T-cell (primary cell): ENCODE measurements at regions of chr1 and their contacts with region 1.

Region 1: DNA sequence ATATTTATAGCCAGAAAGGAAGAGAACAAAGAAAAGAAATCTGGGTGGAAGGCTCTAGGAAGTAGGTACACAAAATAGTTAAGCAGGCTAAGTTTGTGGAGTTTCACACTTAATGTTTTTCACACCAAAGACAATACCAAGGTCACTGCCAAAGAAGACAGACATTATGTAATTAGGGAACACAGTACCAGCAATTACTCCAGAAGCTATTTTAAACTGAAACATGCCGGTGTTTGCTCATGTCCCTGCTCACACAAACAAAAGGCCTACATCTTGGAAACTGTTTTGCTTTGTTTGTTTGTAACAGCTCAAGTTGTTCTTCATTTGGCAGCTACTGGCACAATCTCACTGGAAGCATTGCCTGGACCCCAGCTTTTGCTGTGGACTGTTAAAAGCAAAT is 88.5 kb upstream of the DAB1 start:
- DNase-seq: no peak
- ATAC-seq: no peak
- H3K4me3 ChIP-seq: no peak overlapping the region
- H3K4me3 Mint-ChIP-seq: no peak overlapping the region
- H3K27ac ChIP-seq: no peak overlapping the region
- H3K27ac Mint-ChIP-seq: no peak overlapping the region
- H3K4me1 ChIP-seq: no peaks in the 10 kb centered on the region
- H3K4me1 Mint-ChIP-seq: no peaks in the 10 kb centered on the region
- H3K27me3 ChIP-seq: peaks cover 0 to 3% of the 10 kb centered on the region in 2 experiments
- H3K27me3 Mint-ChIP-seq: peaks cover 8 to 9% of the 10 kb centered on the region in 2 donors

Region 2: GRCh38 chr1:57451516-57451915 is 60.9 kb before region 1 on chr1:
- CTCF ChIA-PET with region 1: no interaction called
- POLR2A ChIA-PET with region 1: interaction called in 1 of 2 experiments, 13 read pairs
- DNase-seq: no peak
- ATAC-seq: no peak
- H3K4me3 ChIP-seq: no peak overlapping the region
- H3K4me3 Mint-ChIP-seq: no peak overlapping the region
- H3K27ac ChIP-seq: no peak overlapping the region
- H3K27ac Mint-ChIP-seq: no peak overlapping the region
- H3K4me1 ChIP-seq: no peaks in the 10 kb centered on the region
- H3K4me1 Mint-ChIP-seq: no peaks in the 10 kb centered on the region
- H3K27me3 ChIP-seq: no peaks in the 10 kb centered on the region
- H3K27me3 Mint-ChIP-seq: peaks cover 3 to 12% of the 10 kb centered on the region in 2 donors